Activated CD4-positive, alpha-beta memory T cell treated with anti-CD3 and anti-CD28 coated beads for 36 hours (primary cell): ENCODE measurements at regions of chr15 and their contacts with region 1.

Region 1: GRCh38 chr15:44728576-44729407 is 7.5 kb upstream of the TRIM69 start:
- DNase-seq: peak; percentile 97
- H3K4me3 Mint-ChIP-seq: peak overlapping the region; percentile 100
- H3K27ac Mint-ChIP-seq: peak overlapping the region; percentile 100
- H3K4me1 Mint-ChIP-seq: peaks cover 66% of the 10 kb centered on the region
- H3K27me3 Mint-ChIP-seq: no peaks in the 10 kb centered on the region

Region 2: GRCh38 chr15:44536962-44537734 is 191.6 kb before region 1 on chr15 and contains the start of gene EIF3J:
- CTCF ChIA-PET with region 1: no interaction called
- POLR2A ChIA-PET with region 1: no interaction called
- intact Hi-C with region 1: loop called (anchors 5 kb)
- DNase-seq: peak; percentile 96
- H3K4me3 Mint-ChIP-seq: peak within 1 kb of the TSS; percentile 84
- H3K27ac Mint-ChIP-seq: peak within 1 kb of the TSS; percentile 94
- H3K4me1 Mint-ChIP-seq: peaks cover 43% of the 10 kb centered on the region
- H3K27me3 Mint-ChIP-seq: no peaks in the 10 kb centered on the region
- total RNA-seq, gene EIF3J: 92.6 to 95.2 TPM

Region 3: GRCh38 chr15:44676676-44677075 is 52.1 kb before region 1 on chr15:
- CTCF ChIA-PET with region 1: interaction called, 3 read pairs
- POLR2A ChIA-PET with region 1: interaction called, 25 read pairs
- intact Hi-C with region 1: loop called (anchors 1 kb)
- DNase-seq: peak; percentile 77
- H3K4me3 Mint-ChIP-seq: peak overlapping the region; percentile 74
- H3K27ac Mint-ChIP-seq: peak overlapping the region; percentile 95
- H3K4me1 Mint-ChIP-seq: peaks cover 83% of the 10 kb centered on the region
- H3K27me3 Mint-ChIP-seq: no peaks in the 10 kb centered on the region

Region 4: DNA sequence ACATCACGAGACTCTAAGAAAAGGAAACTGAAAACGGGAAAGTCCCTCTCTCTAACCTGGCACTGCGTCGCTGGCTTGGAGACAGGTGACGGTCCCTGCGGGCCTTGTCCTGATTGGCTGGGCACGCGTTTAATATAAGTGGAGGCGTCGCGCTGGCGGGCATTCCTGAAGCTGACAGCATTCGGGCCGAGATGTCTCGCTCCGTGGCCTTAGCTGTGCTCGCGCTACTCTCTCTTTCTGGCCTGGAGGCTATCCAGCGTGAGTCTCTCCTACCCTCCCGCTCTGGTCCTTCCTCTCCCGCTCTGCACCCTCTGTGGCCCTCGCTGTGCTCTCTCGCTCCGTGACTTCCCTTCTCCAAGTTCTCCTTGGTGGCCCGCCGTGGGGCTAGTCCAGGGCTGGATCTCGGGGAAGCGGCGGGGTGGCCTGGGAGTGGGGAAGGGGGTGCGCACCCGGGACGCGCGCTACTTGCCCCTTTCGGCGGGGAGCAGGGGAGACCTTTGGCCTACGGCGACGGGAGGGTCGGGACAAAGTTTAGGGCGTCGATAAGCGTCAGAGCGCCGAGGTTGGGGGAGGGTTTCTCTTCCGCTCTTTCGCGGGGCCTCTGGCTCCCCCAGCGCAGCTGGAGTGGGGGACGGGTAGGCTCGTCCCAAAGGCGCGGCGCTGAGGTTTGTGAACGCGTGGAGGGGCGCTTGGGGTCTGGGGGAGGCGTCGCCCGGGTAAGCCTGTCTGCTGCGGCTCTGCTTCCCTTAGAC is 17.3 kb before region 1 on chr15 and contains the start of gene B2M:
- CTCF ChIA-PET with region 1: interaction called, 155 read pairs
- POLR2A ChIA-PET with region 1: interaction called, 1,161 read pairs
- intact Hi-C with region 1: loop called (anchors 1 kb)
- DNase-seq: peak; percentile 96
- H3K4me3 Mint-ChIP-seq: peak within 1 kb of the TSS; percentile 88
- H3K27ac Mint-ChIP-seq: peak within 1 kb of the TSS; percentile 100
- H3K4me1 Mint-ChIP-seq: peaks cover 42% of the 10 kb centered on the region
- H3K27me3 Mint-ChIP-seq: peaks cover 5% of the 10 kb centered on the region
- total RNA-seq, gene B2M: 6,098 to 6,314 TPM

Region 5: DNA sequence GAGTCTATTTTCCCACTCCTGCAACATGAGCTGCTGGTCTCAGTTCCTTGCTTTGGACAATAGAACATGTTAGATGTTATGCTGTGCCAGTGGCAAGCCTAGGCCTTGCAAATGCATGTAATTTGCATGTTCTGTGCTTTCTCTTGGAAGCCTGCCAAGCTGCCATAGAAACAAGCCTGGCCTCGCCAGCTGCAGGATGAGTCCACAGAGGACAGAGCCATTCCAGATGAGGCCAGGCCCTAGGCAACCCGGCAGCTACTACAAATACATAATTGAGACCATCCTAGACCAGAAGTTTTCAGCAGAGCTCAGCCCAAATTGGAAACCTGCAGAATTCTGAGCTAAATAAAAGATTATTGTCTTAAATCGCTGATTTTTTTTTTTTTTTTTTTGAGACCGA is 47.2 kb after region 1 on chr15:
- CTCF ChIA-PET with region 1: no interaction called
- POLR2A ChIA-PET with region 1: no interaction called
- intact Hi-C with region 1: no loop called
- DNase-seq: no peak
- H3K4me3 Mint-ChIP-seq: no peak overlapping the region
- H3K27ac Mint-ChIP-seq: no peak overlapping the region
- H3K4me1 Mint-ChIP-seq: no peaks in the 10 kb centered on the region
- H3K27me3 Mint-ChIP-seq: no peaks in the 10 kb centered on the region

Region 6: DNA sequence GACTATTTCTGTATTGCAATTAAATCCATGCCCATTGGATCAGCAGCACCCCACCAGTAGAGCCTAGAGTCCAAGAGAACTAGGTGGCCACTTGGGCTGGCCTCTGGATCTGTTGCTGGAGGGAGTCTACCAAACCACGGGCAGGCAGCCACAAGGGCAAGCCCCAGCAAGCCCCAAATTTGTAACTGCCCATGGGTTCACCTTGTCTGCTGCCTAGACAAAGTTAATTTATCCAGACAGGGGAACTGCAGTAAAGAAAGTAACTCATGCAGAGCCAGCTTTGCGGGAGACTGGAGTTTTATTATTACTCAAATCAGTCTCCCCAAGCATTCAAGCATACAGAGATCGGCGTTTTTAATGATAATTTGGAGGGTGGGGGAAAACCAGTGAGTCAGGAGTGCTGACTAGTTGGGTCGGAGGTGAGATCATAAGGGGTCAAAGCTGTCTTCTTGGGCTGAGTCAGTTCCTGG is 153.7 kb after region 1 on chr15:
- CTCF ChIA-PET with region 1: no interaction called
- POLR2A ChIA-PET with region 1: no interaction called
- intact Hi-C with region 1: loop called (anchors 5 kb)
- DNase-seq: peak; percentile 82
- H3K4me3 Mint-ChIP-seq: peak overlapping the region; percentile 8
- H3K27ac Mint-ChIP-seq: peak overlapping the region; percentile 59
- H3K4me1 Mint-ChIP-seq: peaks cover 34% of the 10 kb centered on the region
- H3K27me3 Mint-ChIP-seq: peaks cover 11% of the 10 kb centered on the region